Natural killer cell (primary cell): ENCODE measurements at regions of chr6 and their contacts with region 1.

Region 1: GRCh38 chr6:35342258-35343091 is at the start of gene PPARD:
- DNase-seq: peak; percentile 98
- ATAC-seq: peak; percentile 99 to 100 (median 99)
- H3K4me3 ChIP-seq: peak within 1 kb of the TSS; percentile 61
- H3K4me3 Mint-ChIP-seq: peak within 1 kb of the TSS; percentile 95
- H3K27ac ChIP-seq: peak within 1 kb of the TSS; percentile 68
- H3K27ac Mint-ChIP-seq: peak within 1 kb of the TSS; percentile 85 to 94
- H3K4me1 ChIP-seq: peaks cover 13% of the 10 kb centered on the region
- H3K4me1 Mint-ChIP-seq: peaks cover 35 to 40% of the 10 kb centered on the region in 2 donors
- H3K27me3 ChIP-seq: no peaks in the 10 kb centered on the region
- H3K27me3 Mint-ChIP-seq: no peaks in the 10 kb centered on the region
- CTCF ChIP-seq: peak; percentile 90
- total RNA-seq, gene PPARD: 14.4 to 20.4 (median 18.8) TPM

Region 2: GRCh38 chr6:35452186-35453090 is 110.0 kb after region 1 on chr6 and contains the start of gene FANCE:
- intact Hi-C with region 1: loop called (anchors 1 kb)
- DNase-seq: peak; percentile 89 to 90
- ATAC-seq: peak; percentile 86 to 94 (median 91)
- H3K4me3 ChIP-seq: peak within 1 kb of the TSS; percentile 67
- H3K4me3 Mint-ChIP-seq: peak within 1 kb of the TSS; percentile 91
- H3K27ac ChIP-seq: peak within 1 kb of the TSS; percentile 25
- H3K27ac Mint-ChIP-seq: peak within 1 kb of the TSS; percentile 48 to 83
- H3K4me1 ChIP-seq: peaks cover 12% of the 10 kb centered on the region
- H3K4me1 Mint-ChIP-seq: peaks cover 23 to 34% of the 10 kb centered on the region in 2 donors
- H3K27me3 ChIP-seq: no peaks in the 10 kb centered on the region
- H3K27me3 Mint-ChIP-seq: peaks cover 0 to under 1% of the 10 kb centered on the region in 2 donors
- CTCF ChIP-seq: no peak
- total RNA-seq, gene FANCE: 2.2 to 3.2 (median 2.6) TPM

Region 3: GRCh38 chr6:35468181-35468979 is 125.9 kb after region 1 on chr6 and contains the start of gene RPL10A:
- intact Hi-C with region 1: loop called (anchors 1 kb)
- DNase-seq: peak; percentile 91 to 99
- ATAC-seq: peak; percentile 87 to 97 (median 89)
- H3K4me3 ChIP-seq: peak within 1 kb of the TSS; percentile 67
- H3K4me3 Mint-ChIP-seq: peak within 1 kb of the TSS; percentile 97
- H3K27ac ChIP-seq: peak within 1 kb of the TSS; percentile 79
- H3K27ac Mint-ChIP-seq: peak within 1 kb of the TSS; percentile 92 to 98
- H3K4me1 ChIP-seq: peaks cover 31% of the 10 kb centered on the region
- H3K4me1 Mint-ChIP-seq: peaks cover 38% of the 10 kb centered on the region in 2 donors
- H3K27me3 ChIP-seq: no peaks in the 10 kb centered on the region
- H3K27me3 Mint-ChIP-seq: no peaks in the 10 kb centered on the region
- CTCF ChIP-seq: peak; percentile 87
- total RNA-seq, gene RPL10A: 723 to 943 (median 942) TPM

Region 4: DNA sequence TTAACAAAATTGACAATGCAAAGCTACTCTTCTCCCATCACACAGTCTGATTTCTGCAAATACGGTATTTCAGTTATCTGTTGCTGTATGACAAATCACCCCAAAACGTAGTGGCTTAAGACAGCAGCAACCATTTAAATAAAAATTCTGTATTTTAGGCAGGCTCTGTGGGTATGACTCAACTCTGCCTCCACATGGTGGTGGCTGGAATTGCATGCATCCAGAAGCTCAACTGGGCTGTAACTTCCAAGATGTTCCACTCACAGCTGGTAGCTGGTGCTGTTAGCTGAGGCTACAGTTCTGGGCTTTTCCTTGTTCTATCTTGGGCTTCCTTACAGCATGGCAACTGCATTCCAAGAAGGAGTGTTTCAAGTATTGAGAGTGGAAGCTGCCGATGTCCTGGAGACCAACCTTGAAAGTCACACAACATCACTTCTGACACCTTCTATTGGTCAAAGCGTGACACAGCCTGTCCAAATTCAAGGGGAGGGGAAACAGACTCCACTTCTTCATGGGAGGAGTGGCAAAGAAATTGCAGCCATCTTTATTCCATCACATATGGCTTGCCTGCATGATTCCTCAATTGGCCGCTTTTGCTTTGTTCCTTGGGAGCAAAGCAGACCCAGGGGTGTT is 209.9 kb after region 1 on chr6:
- intact Hi-C with region 1: loop called (anchors 1 kb)
- DNase-seq: peak; percentile 63 to 84
- ATAC-seq: peak; percentile 74 to 91 (median 81)
- H3K4me3 ChIP-seq: no peak overlapping the region
- H3K4me3 Mint-ChIP-seq: no peak overlapping the region
- H3K27ac ChIP-seq: no peak overlapping the region
- H3K27ac Mint-ChIP-seq: no peak overlapping the region
- H3K4me1 ChIP-seq: no peaks in the 10 kb centered on the region
- H3K4me1 Mint-ChIP-seq: peaks cover 0 to 6% of the 10 kb centered on the region in 2 donors
- H3K27me3 ChIP-seq: no peaks in the 10 kb centered on the region
- H3K27me3 Mint-ChIP-seq: peaks cover 0 to 3% of the 10 kb centered on the region in 2 donors
- CTCF ChIP-seq: peak; percentile 95

Region 5: GRCh38 chr6:35736253-35736894 is 393.9 kb after region 1 on chr6:
- intact Hi-C with region 1: loop called (anchors 2 kb)
- DNase-seq: peak; percentile 79 to 92
- ATAC-seq: peak; percentile 39 to 60 (median 48)
- H3K4me3 ChIP-seq: no peak overlapping the region
- H3K4me3 Mint-ChIP-seq: no peak overlapping the region
- H3K27ac ChIP-seq: no peak overlapping the region
- H3K27ac Mint-ChIP-seq: no peak overlapping the region
- H3K4me1 ChIP-seq: peaks cover 37% of the 10 kb centered on the region
- H3K4me1 Mint-ChIP-seq: peaks cover 26 to 35% of the 10 kb centered on the region in 2 donors
- H3K27me3 ChIP-seq: no peaks in the 10 kb centered on the region
- H3K27me3 Mint-ChIP-seq: no peaks in the 10 kb centered on the region
- CTCF ChIP-seq: peak; percentile 87